ENCODE measurements at regions of chr5 and their contacts with region 1.

Region 1: GRCh38 chr5:25544652-25545249 is 900.0 kb upstream of the CDH10 start:
- DNase-seq: peak; percentile 13
- ATAC-seq: peak; percentile 89
- H3K4me3 ChIP-seq: no peak overlapping the region
- H3K27ac ChIP-seq: no peak overlapping the region
- H3K4me1 ChIP-seq: no peaks in the 10 kb centered on the region
- H3K27me3 ChIP-seq: no peaks in the 10 kb centered on the region
- CTCF ChIP-seq: peak; percentile 48 to 63 (median 56); a peak in 4 of 6 replicates
- EP300 ChIP-seq: no peak
- POLR2A ChIP-seq: no peak
- RAD21 ChIP-seq: no peak

Region 2: DNA sequence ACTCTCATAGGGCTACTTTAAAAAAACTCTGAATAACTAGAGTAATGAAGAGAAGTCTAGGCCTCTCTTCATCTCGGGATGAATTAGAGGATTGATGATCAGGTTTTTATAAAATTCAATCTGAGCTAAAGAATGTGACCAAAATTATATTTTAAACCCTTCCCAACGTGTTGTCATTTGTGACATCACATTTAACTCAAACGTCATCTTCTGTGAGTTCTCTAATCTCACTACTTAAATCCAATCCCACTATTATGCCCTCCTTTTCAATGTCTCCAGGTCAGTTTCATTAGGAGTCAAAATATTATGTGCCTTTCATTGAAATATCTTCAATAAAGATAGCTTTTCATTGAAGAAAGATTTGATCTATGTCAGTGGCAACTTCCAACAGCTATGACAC is 704.4 kb before region 1 on chr5:
- CTCF ChIA-PET with region 1: no interaction called
- POLR2A ChIA-PET with region 1: no interaction called
- RAD21 ChIA-PET with region 1: no interaction called
- SMC1A ChIA-PET with region 1: no interaction called
- in situ Hi-C with region 1: no loop called
- intact Hi-C with region 1: no loop called
- DNase-seq: no peak
- ATAC-seq: no peak
- H3K4me3 ChIP-seq: no peak overlapping the region
- H3K27ac ChIP-seq: no peak overlapping the region
- H3K4me1 ChIP-seq: no peaks in the 10 kb centered on the region
- H3K27me3 ChIP-seq: no peaks in the 10 kb centered on the region
- CTCF ChIP-seq: no peak
- EP300 ChIP-seq: no peak
- POLR2A ChIP-seq: no peak
- RAD21 ChIP-seq: no peak

Region 3: GRCh38 chr5:25405850-25406249 is 138.9 kb before region 1 on chr5:
- CTCF ChIA-PET with region 1: no interaction called
- POLR2A ChIA-PET with region 1: no interaction called
- RAD21 ChIA-PET with region 1: no interaction called
- SMC1A ChIA-PET with region 1: no interaction called
- in situ Hi-C with region 1: no loop called
- intact Hi-C with region 1: no loop called
- DNase-seq: no peak
- ATAC-seq: no peak
- H3K4me3 ChIP-seq: no peak overlapping the region
- H3K27ac ChIP-seq: no peak overlapping the region
- H3K4me1 ChIP-seq: no peaks in the 10 kb centered on the region
- H3K27me3 ChIP-seq: no peaks in the 10 kb centered on the region
- CTCF ChIP-seq: no peak
- EP300 ChIP-seq: no peak
- POLR2A ChIP-seq: no peak
- RAD21 ChIP-seq: no peak

Region 4: DNA sequence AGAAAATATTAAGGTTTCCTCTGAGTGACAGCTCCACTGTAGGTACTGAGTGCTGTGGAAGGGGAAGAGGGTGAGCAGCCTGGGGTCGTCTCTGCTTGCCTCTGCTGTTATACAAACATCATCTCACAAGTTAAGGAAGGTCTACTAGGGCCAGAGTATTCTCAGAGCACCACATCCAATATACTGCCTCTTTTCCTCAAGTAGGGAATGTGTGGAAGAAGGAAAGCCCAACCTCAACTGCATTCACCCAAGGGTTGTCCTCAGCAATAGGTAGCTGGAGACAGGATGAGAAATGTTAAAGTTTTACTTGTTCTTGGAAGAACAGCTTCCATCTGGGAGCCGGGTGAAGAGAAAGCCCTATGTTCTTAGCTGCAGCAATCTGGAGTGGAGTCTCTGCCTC is 162.3 kb after region 1 on chr5:
- CTCF ChIA-PET with region 1: interaction called, 9 read pairs
- POLR2A ChIA-PET with region 1: no interaction called
- RAD21 ChIA-PET with region 1: no interaction called
- SMC1A ChIA-PET with region 1: interaction called, 5 read pairs
- in situ Hi-C with region 1: no loop called
- intact Hi-C with region 1: loop called (anchors 5 kb)
- DNase-seq: no peak
- ATAC-seq: peak; percentile 37; the same call in 2 of the 3 replicates
- H3K4me3 ChIP-seq: no peak overlapping the region
- H3K27ac ChIP-seq: no peak overlapping the region
- H3K4me1 ChIP-seq: no peaks in the 10 kb centered on the region
- H3K27me3 ChIP-seq: no peaks in the 10 kb centered on the region
- CTCF ChIP-seq: no peak
- EP300 ChIP-seq: no peak
- POLR2A ChIP-seq: no peak
- RAD21 ChIP-seq: no peak

Region 5: DNA sequence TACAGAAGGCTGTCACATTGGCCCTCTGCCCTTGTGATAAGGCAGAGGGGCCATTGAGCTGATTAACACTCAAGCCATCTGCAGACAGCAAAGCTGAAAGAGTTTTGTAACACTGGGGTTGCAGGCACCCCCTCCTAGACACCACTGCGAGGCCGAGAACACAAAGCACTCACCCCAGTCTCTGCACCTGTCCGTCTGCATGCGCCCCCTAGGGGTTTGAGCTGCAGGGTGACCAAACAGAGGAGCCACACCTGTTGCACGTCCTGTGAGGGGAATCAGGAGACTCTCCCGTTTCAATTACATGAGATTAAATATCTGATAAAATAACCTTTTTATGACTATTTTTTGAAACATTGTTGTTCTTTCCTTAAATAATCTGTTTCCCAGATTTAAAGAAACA is 313.3 kb after region 1 on chr5:
- CTCF ChIA-PET with region 1: no interaction called
- POLR2A ChIA-PET with region 1: no interaction called
- RAD21 ChIA-PET with region 1: no interaction called
- SMC1A ChIA-PET with region 1: no interaction called
- in situ Hi-C with region 1: no loop called
- intact Hi-C with region 1: loop called (anchors 10 kb)
- DNase-seq: no peak
- ATAC-seq: peak; percentile 76
- H3K4me3 ChIP-seq: no peak overlapping the region
- H3K27ac ChIP-seq: no peak overlapping the region
- H3K4me1 ChIP-seq: no peaks in the 10 kb centered on the region
- H3K27me3 ChIP-seq: no peaks in the 10 kb centered on the region
- CTCF ChIP-seq: peak in 1 of 3 experiments; percentile 28; a peak in 1 of 6 replicates
- EP300 ChIP-seq: no peak
- POLR2A ChIP-seq: no peak
- RAD21 ChIP-seq: no peak

Region 6: DNA sequence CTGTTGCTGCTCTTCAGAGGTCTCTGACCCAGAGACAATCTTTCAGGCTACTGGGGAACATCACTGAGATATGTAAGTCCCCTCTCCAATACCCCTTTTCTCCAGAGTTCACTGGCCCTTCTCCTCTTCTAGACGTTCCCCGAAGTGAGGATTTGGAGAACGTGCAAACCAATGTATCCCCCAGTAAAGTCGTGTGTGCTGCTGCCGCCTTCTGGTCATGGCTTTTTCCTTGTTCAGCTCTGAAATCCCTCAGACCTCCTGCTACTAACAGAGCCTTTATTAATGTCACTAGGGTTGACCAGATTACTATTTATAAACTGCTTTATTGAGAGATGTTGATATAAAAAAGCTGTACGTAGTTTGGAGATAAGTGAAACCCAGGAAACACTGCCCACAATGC is 465.0 kb after region 1 on chr5:
- CTCF ChIA-PET with region 1: no interaction called
- POLR2A ChIA-PET with region 1: no interaction called
- RAD21 ChIA-PET with region 1: no interaction called
- SMC1A ChIA-PET with region 1: no interaction called
- in situ Hi-C with region 1: no loop called
- intact Hi-C with region 1: loop called (anchors 10 kb)
- DNase-seq: no peak
- ATAC-seq: no peak
- H3K4me3 ChIP-seq: no peak overlapping the region
- H3K27ac ChIP-seq: no peak overlapping the region
- H3K4me1 ChIP-seq: no peaks in the 10 kb centered on the region
- H3K27me3 ChIP-seq: no peaks in the 10 kb centered on the region
- CTCF ChIP-seq: peak in 2 of 3 experiments; percentile 26 to 28; a peak in 2 of 6 replicates
- EP300 ChIP-seq: no peak
- POLR2A ChIP-seq: no peak
- RAD21 ChIP-seq: no peak